Panc1 (cell line): ENCODE measurements at regions of chr10 and their contacts with region 1.

Region 1: GRCh38 chr10:62025901-62026879 is 124.7 kb downstream of the ARID5B start:
- DNase-seq: no peak
- ATAC-seq: no peak
- H3K4me3 ChIP-seq: no peak overlapping the region
- H3K27ac ChIP-seq: 0 out of 2 replicates have a peak overlapping the region, but pooled peaks have one; percentile 3
- H3K4me1 ChIP-seq: peaks cover 33% of the 10 kb centered on the region
- H3K27me3 ChIP-seq: no peaks in the 10 kb centered on the region
- CTCF ChIP-seq: no peak

Region 2: DNA sequence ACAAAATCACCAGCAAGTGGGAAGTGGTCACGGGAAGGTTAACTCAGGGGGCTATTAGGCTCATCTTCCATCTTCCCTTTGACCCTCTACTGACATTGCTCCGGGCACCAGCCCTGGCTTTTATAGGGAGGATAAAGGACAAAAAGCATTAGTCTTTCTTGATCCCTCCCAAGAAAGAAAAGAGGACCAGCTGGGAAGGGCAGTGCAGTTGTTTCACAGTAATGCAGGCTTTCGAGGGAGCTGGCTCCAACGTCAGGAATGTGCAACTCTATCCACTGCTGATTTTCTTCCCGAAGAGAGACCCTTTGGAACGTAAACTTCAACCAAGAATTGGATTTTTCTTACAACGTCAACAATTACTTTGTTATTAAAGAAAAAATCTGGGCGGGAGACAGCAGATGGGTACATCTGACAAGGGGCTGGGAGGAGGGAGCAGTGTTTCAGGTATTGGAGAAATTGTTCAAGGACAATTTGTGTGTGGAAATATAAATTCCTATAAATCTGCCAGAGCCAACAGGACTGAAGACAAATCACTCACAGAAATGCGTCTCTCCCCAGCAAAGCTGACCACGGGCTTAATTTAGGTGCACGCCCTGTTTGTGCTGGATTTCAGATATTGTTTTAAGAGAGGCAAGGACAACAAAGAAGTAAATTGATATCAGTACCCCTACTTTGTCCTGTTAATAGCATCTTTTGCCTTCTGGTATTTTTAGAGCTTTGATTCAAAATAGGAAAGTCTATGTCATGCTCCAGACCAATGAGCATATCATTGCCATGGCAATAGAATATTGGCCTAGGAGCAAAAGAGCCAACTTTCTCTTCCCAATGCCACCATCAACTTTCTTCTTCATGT is 148.1 kb before region 1 on chr10:
- CTCF ChIA-PET with region 1: no interaction called
- POLR2A ChIA-PET with region 1: no interaction called
- in situ Hi-C with region 1: no loop called
- intact Hi-C with region 1: no loop called
- DNase-seq: no peak
- ATAC-seq: no peak
- H3K4me3 ChIP-seq: no peak overlapping the region
- H3K27ac ChIP-seq: peak overlapping the region; percentile 3; the same call in 1 of the 2 replicates
- H3K4me1 ChIP-seq: no peaks in the 10 kb centered on the region
- H3K27me3 ChIP-seq: no peaks in the 10 kb centered on the region
- CTCF ChIP-seq: no peak

Region 3: GRCh38 chr10:62153191-62153590 is 127.0 kb after region 1 on chr10:
- CTCF ChIA-PET with region 1: no interaction called
- POLR2A ChIA-PET with region 1: no interaction called
- in situ Hi-C with region 1: no loop called
- intact Hi-C with region 1: no loop called
- DNase-seq: no peak
- ATAC-seq: no peak
- H3K4me3 ChIP-seq: no peak overlapping the region
- H3K27ac ChIP-seq: no peak overlapping the region
- H3K4me1 ChIP-seq: no peaks in the 10 kb centered on the region
- H3K27me3 ChIP-seq: no peaks in the 10 kb centered on the region
- CTCF ChIP-seq: no peak

Region 4: GRCh38 chr10:62194924-62195674 is 168.9 kb after region 1 on chr10:
- CTCF ChIA-PET with region 1: interaction called, 13 read pairs
- POLR2A ChIA-PET with region 1: no interaction called
- in situ Hi-C with region 1: no loop called
- intact Hi-C with region 1: no loop called
- DNase-seq: no peak
- ATAC-seq: no peak
- H3K4me3 ChIP-seq: no peak overlapping the region
- H3K27ac ChIP-seq: peak overlapping the region; percentile 68
- H3K4me1 ChIP-seq: peaks cover 12% of the 10 kb centered on the region; the same call in 1 of the 2 replicates
- H3K27me3 ChIP-seq: no peaks in the 10 kb centered on the region
- CTCF ChIP-seq: no peak

Region 5: GRCh38 chr10:63318491-63318890 is 1292.3 kb after region 1 on chr10:
- CTCF ChIA-PET with region 1: no interaction called
- POLR2A ChIA-PET with region 1: no interaction called
- in situ Hi-C with region 1: no loop called
- intact Hi-C with region 1: no loop called
- DNase-seq: no peak
- ATAC-seq: no peak
- H3K4me3 ChIP-seq: no peak overlapping the region
- H3K27ac ChIP-seq: no peak overlapping the region
- H3K4me1 ChIP-seq: no peaks in the 10 kb centered on the region
- H3K27me3 ChIP-seq: no peaks in the 10 kb centered on the region
- CTCF ChIP-seq: no peak